ENCODE measurements at regions of chr19 and their contacts with region 1.

Region 1: GRCh38 chr19:44770550-44771257 is 7.0 kb upstream of the CBLC start:
- DNase-seq: peak; percentile 97
- ATAC-seq: peak; percentile 100
- H3K4me3 ChIP-seq: no peak overlapping the region
- H3K27ac ChIP-seq: no peak overlapping the region
- H3K4me1 ChIP-seq: peaks cover 20% of the 10 kb centered on the region
- H3K27me3 ChIP-seq: no peaks in the 10 kb centered on the region
- CTCF ChIP-seq: peak; percentile 81

Region 2: GRCh38 chr19:44723952-44724319 is 46.8 kb before region 1 on chr19:
- intact Hi-C with region 1: loop called (anchors 5 kb)
- DNase-seq: peak; percentile 84
- ATAC-seq: peak; percentile 90 to 92
- H3K4me3 ChIP-seq: peak overlapping the region; percentile 4
- H3K27ac ChIP-seq: peak overlapping the region; percentile 56
- H3K4me1 ChIP-seq: peaks cover 71% of the 10 kb centered on the region
- H3K27me3 ChIP-seq: no peaks in the 10 kb centered on the region
- CTCF ChIP-seq: peak; percentile 100

Region 3: DNA sequence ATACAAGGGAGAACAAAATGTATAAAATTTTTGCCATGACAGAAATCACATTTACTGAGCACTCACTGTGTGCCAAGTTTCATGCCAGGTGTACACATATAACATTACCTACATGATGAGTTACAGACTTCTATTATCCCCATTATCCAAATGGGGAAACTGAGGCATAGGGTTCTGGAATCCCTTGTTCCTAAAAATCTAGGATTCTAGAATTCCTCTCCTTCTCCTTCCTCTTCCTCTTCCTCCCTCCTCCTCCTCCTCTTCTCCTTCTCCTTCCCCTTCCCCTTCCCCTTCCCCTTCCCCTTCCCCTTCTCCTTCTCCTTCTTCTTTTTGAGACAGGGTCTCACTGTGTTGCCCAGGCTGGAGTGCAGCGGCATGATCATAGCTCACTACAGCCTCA is 36.3 kb before region 1 on chr19:
- intact Hi-C with region 1: no loop called
- DNase-seq: no peak
- ATAC-seq: no peak
- H3K4me3 ChIP-seq: no peak overlapping the region
- H3K27ac ChIP-seq: no peak overlapping the region
- H3K4me1 ChIP-seq: peaks cover 27% of the 10 kb centered on the region
- H3K27me3 ChIP-seq: no peaks in the 10 kb centered on the region
- CTCF ChIP-seq: no peak

Region 4: GRCh38 chr19:44903602-44904425 is 133.1 kb after region 1 on chr19:
- intact Hi-C with region 1: no loop called
- DNase-seq: peak; percentile 79
- ATAC-seq: peak; percentile 73 to 75
- H3K4me3 ChIP-seq: no peak overlapping the region
- H3K27ac ChIP-seq: no peak overlapping the region
- H3K4me1 ChIP-seq: peaks cover 5% of the 10 kb centered on the region
- H3K27me3 ChIP-seq: peaks cover 19% of the 10 kb centered on the region
- CTCF ChIP-seq: peak; percentile 99

Measured in lower lobe of right lung (tissue), 2 donors.